ENCODE measurements at regions of chr20 and their contacts with region 1.

Region 1: GRCh38 chr20:38825901-38826625 is 20.6 kb downstream of the PPP1R16B start:
- DNase-seq: no peak
- ATAC-seq: no peak

Region 2: DNA sequence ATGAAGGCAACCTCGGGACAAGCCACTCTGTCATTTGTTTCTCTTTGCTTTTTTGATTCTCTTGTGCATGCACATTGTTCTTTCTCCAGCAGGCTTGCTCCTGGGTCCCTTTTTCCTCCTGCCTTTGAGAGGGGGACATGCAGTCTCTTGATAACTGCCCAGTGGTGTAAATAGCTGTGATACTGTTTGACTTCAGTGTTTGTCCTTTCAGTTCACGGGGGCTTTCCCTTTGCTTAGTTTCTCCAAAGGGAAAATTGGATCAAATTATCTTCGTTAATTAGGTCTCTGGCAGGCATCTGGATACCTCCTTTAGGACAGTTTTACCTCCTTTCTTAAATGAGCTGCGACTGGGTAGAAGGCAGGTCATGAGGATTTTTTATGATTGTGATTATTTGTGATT is 311.9 kb before region 1 on chr20:
- intact Hi-C with region 1: no loop called
- DNase-seq: no peak
- ATAC-seq: no peak

Region 3: GRCh38 chr20:38875175-38875993 is 49.3 kb after region 1 on chr20:
- intact Hi-C with region 1: loop called (anchors 10 kb)
- DNase-seq: no peak
- ATAC-seq: peak; percentile 77

Region 4: GRCh38 chr20:38926142-38926933 is 100.3 kb after region 1 on chr20 and contains the start of gene FAM83D:
- intact Hi-C with region 1: no loop called
- DNase-seq: peak; percentile 95
- ATAC-seq: peak; percentile 98
- total RNA-seq, gene FAM83D: 0.20 TPM

Region 5: DNA sequence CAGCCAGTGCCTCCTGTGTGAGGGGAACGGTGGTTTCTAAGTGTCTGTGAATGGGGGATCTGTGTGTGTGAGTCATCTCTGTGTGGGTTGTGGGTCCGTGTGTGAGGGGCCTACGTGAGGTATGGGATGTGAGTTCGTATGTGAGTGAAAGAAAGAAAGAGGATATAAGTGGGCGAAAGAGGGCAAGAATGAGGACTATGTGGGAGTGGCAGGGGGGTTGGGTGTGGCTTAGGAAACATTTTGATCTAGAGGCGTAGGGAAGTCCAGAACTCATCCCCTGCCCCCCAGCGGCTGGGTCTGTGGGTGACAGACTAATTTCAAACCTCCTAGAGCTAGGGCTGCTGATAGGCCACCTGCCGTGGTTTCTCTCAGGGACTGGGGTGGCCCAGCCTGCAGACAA is 171.6 kb after region 1 on chr20:
- intact Hi-C with region 1: no loop called
- DNase-seq: no peak
- ATAC-seq: no peak

Measured in left ventricle myocardium superior (tissue), 1 donor.